AG04450 (cell line): ENCODE measurements at regions of chr3 and their contacts with region 1.

Region 1: GRCh38 chr3:126522363-126522788 is 1.6 kb upstream of the CHST13 start:
- DNase-seq: no peak
- H3K4me3 ChIP-seq: no peak overlapping the region
- H3K27ac ChIP-seq: no peak overlapping the region
- H3K27me3 ChIP-seq: peaks cover 34% of the 10 kb centered on the region
- CTCF ChIP-seq: peak; percentile 84

Region 2: DNA sequence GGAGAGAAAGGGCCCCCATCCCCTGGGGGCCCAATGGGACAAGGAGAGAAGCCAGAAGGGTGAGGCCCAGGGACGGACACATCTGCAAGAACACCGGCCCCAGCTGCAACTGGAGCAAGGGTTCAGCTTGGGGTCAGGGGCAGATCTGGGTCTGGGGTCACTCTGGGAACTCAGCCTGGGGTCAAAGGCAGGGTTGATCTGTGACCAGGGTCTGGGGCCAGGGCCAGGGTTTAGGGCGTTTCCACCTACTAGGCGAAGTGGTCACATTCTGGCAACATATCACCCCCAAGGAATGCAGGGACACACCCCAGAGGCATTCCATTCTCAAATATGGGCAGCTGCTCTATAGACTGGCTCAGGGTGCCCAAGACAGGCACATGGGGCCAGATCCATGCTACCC is 13.8 kb before region 1 on chr3:
- CTCF ChIA-PET with region 1: interaction called, 37 read pairs
- POLR2A ChIA-PET with region 1: no interaction called
- DNase-seq: no peak
- H3K4me3 ChIP-seq: no peak overlapping the region
- H3K27ac ChIP-seq: no peak overlapping the region
- H3K27me3 ChIP-seq: peaks cover 7% of the 10 kb centered on the region
- CTCF ChIP-seq: no peak

Region 3: DNA sequence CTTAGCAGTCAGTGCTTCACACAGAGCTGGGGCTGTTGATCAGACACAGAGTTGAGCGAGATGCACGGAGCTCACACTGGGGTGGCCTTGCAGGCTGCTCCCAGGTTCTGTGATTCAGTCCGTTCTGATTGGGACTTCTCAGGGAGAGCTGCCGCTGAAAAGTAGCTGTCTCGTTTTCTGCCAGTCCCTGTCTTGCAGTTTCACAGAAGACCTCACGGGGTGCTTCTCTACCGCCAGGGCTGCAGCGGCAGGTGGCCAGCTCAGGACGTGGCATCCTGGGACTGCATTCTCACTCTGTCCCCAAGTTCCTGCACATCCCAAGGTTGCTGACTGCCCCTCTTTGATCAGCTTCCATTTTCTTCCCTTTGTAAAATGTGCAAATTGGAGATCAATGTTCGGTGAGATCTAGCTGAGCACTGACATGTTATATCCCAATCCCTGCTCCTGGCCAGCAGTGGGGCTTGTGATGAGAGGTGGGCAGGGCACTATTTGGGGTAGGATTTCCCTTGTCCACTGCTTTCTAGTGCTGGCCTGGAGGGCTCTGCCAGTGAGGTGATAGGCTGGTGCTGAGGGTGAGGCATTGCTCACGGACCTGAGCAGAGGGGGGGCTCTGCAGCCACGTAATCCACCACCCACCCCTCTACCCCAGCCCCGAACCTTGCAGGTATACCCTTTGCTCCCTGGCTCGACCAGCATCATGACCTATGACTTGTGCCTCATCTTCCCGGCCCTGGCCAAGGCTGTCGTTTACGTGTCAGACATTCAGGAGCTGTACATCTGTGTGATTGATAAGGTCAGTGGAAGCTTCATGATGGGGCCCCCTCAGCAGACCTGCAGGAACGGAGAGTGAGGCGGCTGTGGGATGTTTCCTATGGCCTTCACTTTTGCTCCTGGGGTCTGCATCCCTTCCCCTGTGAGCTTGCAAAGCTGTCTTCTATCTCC is 137.8 kb after region 1 on chr3:
- CTCF ChIA-PET with region 1: interaction called, 10 read pairs
- POLR2A ChIA-PET with region 1: no interaction called
- DNase-seq: no peak
- H3K4me3 ChIP-seq: no peak overlapping the region
- H3K27ac ChIP-seq: no peak overlapping the region
- H3K27me3 ChIP-seq: peaks cover 49% of the 10 kb centered on the region
- CTCF ChIP-seq: peak; percentile 40

Region 4: GRCh38 chr3:127455541-127456450 is 933.4 kb after region 1 on chr3:
- CTCF ChIA-PET with region 1: interaction called, 11 read pairs
- POLR2A ChIA-PET with region 1: no interaction called
- DNase-seq: no peak
- H3K4me3 ChIP-seq: peak overlapping the region; percentile 48
- H3K27ac ChIP-seq: no peak overlapping the region
- H3K27me3 ChIP-seq: peaks cover 45% of the 10 kb centered on the region
- CTCF ChIP-seq: peak; percentile 75